B cell (primary cell): ENCODE measurements at regions of chr6 and their contacts with region 1.

Region 1: GRCh38 chr6:87701676-87702588 is at the start of gene AKIRIN2:
- DNase-seq: peak; percentile 99
- ATAC-seq: peak; percentile 77
- H3K4me3 ChIP-seq: peak within 1 kb of the TSS; percentile 86 to 100 (median 92)
- H3K4me3 Mint-ChIP-seq: peak within 1 kb of the TSS; percentile 97
- H3K27ac ChIP-seq: peak within 1 kb of the TSS; percentile 96 to 98
- H3K27ac Mint-ChIP-seq: peak within 1 kb of the TSS; percentile 99
- H3K4me1 ChIP-seq: peaks cover 16 to 32% of the 10 kb centered on the region in 2 donors
- H3K4me1 Mint-ChIP-seq: peaks cover 53% of the 10 kb centered on the region
- H3K27me3 ChIP-seq: no peaks in the 10 kb centered on the region
- H3K27me3 Mint-ChIP-seq: no peaks in the 10 kb centered on the region
- CTCF ChIP-seq: no peak
- total RNA-seq, gene AKIRIN2: 105 and 108 TPM in 2 replicates

Region 2: GRCh38 chr6:87407901-87408720 is 293.8 kb before region 1 on chr6 and contains the start of gene CFAP206:
- CTCF ChIA-PET with region 1: no interaction called
- POLR2A ChIA-PET with region 1: interaction called, 3 read pairs
- intact Hi-C with region 1: loop called (anchors 5 kb)
- DNase-seq: peak; percentile 91
- ATAC-seq: peak; percentile 75
- H3K4me3 ChIP-seq: peak within 1 kb of the TSS; percentile 83 to 98 (median 94)
- H3K4me3 Mint-ChIP-seq: peak within 1 kb of the TSS; percentile 91
- H3K27ac ChIP-seq: peak within 1 kb of the TSS; percentile 57 to 81
- H3K27ac Mint-ChIP-seq: peak within 1 kb of the TSS; percentile 86
- H3K4me1 ChIP-seq: peaks cover 4 to 10% of the 10 kb centered on the region in 2 donors
- H3K4me1 Mint-ChIP-seq: peaks cover 9% of the 10 kb centered on the region
- H3K27me3 ChIP-seq: peaks cover 0 to 7% (median 0%) of the 10 kb centered on the region in 4 experiments
- H3K27me3 Mint-ChIP-seq: peaks cover 8% of the 10 kb centered on the region
- CTCF ChIP-seq: no peak
- total RNA-seq, gene CFAP206: not detected in 2 replicates

Region 3: DNA sequence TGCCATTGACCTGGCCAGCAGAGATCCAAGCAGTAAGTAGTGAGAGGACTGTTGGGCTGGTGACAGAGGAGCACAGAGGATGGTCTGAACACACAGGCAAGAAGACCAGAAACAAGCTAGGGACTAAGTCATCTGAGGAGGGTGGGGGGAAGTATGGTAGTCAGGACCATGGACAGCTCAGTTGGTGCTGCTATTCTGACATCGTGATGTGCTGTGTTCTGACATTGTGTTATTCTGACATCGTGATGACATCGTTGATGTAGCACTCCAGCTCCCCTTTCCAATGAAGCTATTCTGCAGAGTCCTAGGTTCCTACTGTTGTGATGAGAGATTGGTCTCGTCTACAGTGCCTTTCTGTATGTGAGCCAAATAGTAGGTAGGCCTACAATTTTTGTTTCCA is 265.5 kb before region 1 on chr6:
- CTCF ChIA-PET with region 1: no interaction called
- POLR2A ChIA-PET with region 1: no interaction called
- intact Hi-C with region 1: no loop called
- DNase-seq: peak; percentile 61
- ATAC-seq: peak; percentile 41
- H3K4me3 ChIP-seq: no peak overlapping the region
- H3K4me3 Mint-ChIP-seq: no peak overlapping the region
- H3K27ac ChIP-seq: no peak overlapping the region
- H3K27ac Mint-ChIP-seq: no peak overlapping the region
- H3K4me1 ChIP-seq: no peaks in the 10 kb centered on the region
- H3K4me1 Mint-ChIP-seq: no peaks in the 10 kb centered on the region
- H3K27me3 ChIP-seq: no peaks in the 10 kb centered on the region
- H3K27me3 Mint-ChIP-seq: peaks cover 8% of the 10 kb centered on the region
- CTCF ChIP-seq: no peak

Region 4: DNA sequence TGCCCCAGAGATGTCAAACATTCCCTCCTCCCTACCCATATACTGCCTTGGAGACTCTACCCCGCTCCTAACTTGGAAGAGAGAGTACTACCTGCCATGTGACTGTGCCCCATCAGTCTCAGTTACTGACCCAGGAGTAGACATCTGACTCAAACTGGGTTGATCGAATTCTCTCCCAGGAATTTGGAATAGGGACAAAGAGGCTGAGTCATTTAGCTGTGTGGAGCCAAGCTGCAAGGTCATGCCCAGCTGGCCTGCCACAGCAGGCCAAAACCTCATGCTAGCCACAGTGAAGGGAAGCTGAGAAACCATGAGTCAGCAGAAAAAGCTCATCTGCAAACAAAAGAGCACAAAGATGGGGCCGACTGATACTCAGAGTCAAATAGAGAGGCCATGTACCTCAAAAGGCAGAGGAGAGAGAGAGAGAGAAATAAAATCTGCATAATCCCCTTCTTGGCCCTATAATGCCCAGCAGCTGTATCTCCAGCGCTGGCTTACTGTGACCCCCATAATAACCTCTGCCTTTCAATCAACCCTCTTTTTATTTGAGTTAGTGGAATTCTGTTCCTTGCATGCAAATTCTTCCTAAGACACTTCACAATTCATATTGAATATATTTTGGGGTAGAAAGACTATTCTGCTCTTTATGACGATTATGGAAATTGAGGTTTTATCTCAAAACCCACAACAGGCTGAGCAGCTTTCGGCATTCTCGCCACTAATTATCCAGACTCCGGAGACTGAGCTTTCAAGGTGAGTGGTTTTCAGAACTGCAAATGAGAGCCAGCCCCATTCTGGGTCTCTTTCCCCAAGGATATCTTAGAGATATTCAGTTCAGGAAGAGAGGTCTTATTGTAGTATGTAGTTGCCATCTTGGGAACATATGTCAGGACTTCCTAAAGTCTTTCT is 21.5 kb after region 1 on chr6:
- CTCF ChIA-PET with region 1: interaction called, 4 read pairs
- POLR2A ChIA-PET with region 1: interaction called, 5 read pairs
- intact Hi-C with region 1: loop called (anchors 1 kb)
- DNase-seq: no peak
- ATAC-seq: no peak
- H3K4me3 ChIP-seq: no peak overlapping the region
- H3K4me3 Mint-ChIP-seq: no peak overlapping the region
- H3K27ac ChIP-seq: no peak overlapping the region
- H3K27ac Mint-ChIP-seq: no peak overlapping the region
- H3K4me1 ChIP-seq: peaks cover 24 to 28% of the 10 kb centered on the region in 2 donors
- H3K4me1 Mint-ChIP-seq: peaks cover 30% of the 10 kb centered on the region
- H3K27me3 ChIP-seq: no peaks in the 10 kb centered on the region
- H3K27me3 Mint-ChIP-seq: no peaks in the 10 kb centered on the region
- CTCF ChIP-seq: no peak

Region 5: GRCh38 chr6:87784690-87785089 is 82.8 kb after region 1 on chr6:
- CTCF ChIA-PET with region 1: no interaction called
- POLR2A ChIA-PET with region 1: no interaction called
- intact Hi-C with region 1: no loop called
- DNase-seq: no peak
- ATAC-seq: no peak
- H3K4me3 ChIP-seq: no peak overlapping the region
- H3K4me3 Mint-ChIP-seq: no peak overlapping the region
- H3K27ac ChIP-seq: no peak overlapping the region
- H3K27ac Mint-ChIP-seq: no peak overlapping the region
- H3K4me1 ChIP-seq: no peaks in the 10 kb centered on the region
- H3K4me1 Mint-ChIP-seq: no peaks in the 10 kb centered on the region
- H3K27me3 ChIP-seq: no peaks in the 10 kb centered on the region
- H3K27me3 Mint-ChIP-seq: no peaks in the 10 kb centered on the region
- CTCF ChIP-seq: no peak

Region 6: GRCh38 chr6:87799651-87800050 is 97.7 kb after region 1 on chr6:
- CTCF ChIA-PET with region 1: interaction called, 3 read pairs
- POLR2A ChIA-PET with region 1: interaction called, 4 read pairs
- intact Hi-C with region 1: loop called (anchors 2 kb)
- DNase-seq: peak; percentile 63
- ATAC-seq: peak; percentile 69
- H3K4me3 ChIP-seq: peak overlapping the region in 2 of 5 experiments; percentile 13 to 20
- H3K4me3 Mint-ChIP-seq: peak overlapping the region; percentile 42
- H3K27ac ChIP-seq: peak overlapping the region in 1 of 2 donors; percentile 50
- H3K27ac Mint-ChIP-seq: peak overlapping the region; percentile 28
- H3K4me1 ChIP-seq: peaks cover 38 to 54% of the 10 kb centered on the region in 2 donors
- H3K4me1 Mint-ChIP-seq: peaks cover 46% of the 10 kb centered on the region
- H3K27me3 ChIP-seq: no peaks in the 10 kb centered on the region
- H3K27me3 Mint-ChIP-seq: no peaks in the 10 kb centered on the region
- CTCF ChIP-seq: no peak

Region 7: DNA sequence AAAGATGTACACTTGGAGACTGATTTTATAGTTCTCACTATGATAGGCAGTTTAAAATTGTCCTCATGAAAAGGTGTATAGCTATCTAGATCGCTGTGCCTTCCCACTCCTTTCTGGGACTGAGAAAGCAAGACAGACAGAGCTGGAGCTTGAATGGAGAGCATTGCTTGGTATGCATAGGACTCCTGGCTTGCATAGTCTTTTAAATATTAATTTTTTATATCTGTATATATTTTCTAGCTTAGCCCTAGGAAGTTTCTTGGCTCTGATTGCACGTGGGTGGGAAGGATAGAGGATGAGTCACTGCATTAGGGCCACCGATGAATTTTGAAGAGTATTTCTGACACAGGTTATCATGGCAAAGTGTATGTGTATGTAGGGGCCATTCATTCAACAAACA is 195.7 kb after region 1 on chr6:
- CTCF ChIA-PET with region 1: no interaction called
- POLR2A ChIA-PET with region 1: no interaction called
- intact Hi-C with region 1: no loop called
- DNase-seq: no peak
- ATAC-seq: no peak
- H3K4me3 ChIP-seq: no peak overlapping the region
- H3K4me3 Mint-ChIP-seq: no peak overlapping the region
- H3K27ac ChIP-seq: no peak overlapping the region
- H3K27ac Mint-ChIP-seq: no peak overlapping the region
- H3K4me1 ChIP-seq: no peaks in the 10 kb centered on the region
- H3K4me1 Mint-ChIP-seq: no peaks in the 10 kb centered on the region
- H3K27me3 ChIP-seq: no peaks in the 10 kb centered on the region
- H3K27me3 Mint-ChIP-seq: no peaks in the 10 kb centered on the region
- CTCF ChIP-seq: no peak

Region 8: GRCh38 chr6:88072462-88072861 is 370.5 kb after region 1 on chr6:
- CTCF ChIA-PET with region 1: no interaction called
- POLR2A ChIA-PET with region 1: no interaction called
- intact Hi-C with region 1: no loop called
- DNase-seq: no peak
- ATAC-seq: no peak
- H3K4me3 ChIP-seq: no peak overlapping the region
- H3K4me3 Mint-ChIP-seq: no peak overlapping the region
- H3K27ac ChIP-seq: no peak overlapping the region
- H3K27ac Mint-ChIP-seq: no peak overlapping the region
- H3K4me1 ChIP-seq: no peaks in the 10 kb centered on the region
- H3K4me1 Mint-ChIP-seq: peaks cover 4% of the 10 kb centered on the region
- H3K27me3 ChIP-seq: peaks cover 0 to 4% (median 0%) of the 10 kb centered on the region in 4 experiments
- H3K27me3 Mint-ChIP-seq: no peaks in the 10 kb centered on the region
- CTCF ChIP-seq: no peak

Region 9: DNA sequence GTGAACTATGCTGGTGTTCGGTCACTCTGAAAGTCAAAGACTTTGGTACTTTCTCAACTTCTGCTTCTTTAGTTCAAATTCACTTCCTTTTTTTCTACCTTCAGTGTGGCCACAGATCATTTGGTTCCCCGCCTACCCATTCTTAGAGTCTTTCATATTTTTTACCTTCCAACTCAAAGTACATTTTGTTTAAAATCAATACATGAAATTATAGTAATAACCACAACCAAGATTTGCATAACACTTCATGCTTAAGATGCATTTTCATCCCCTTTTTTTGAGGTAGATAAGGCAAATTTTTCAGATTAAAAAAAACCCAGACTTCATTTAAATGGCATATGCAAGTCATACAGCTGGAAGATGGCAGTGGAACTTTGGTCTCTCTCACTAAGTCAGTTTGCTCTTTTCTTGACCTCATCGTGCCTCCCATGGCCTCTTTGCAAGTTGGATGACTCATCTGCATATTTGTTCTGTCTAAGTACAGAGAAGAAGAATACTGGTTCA is 476.1 kb after region 1 on chr6:
- CTCF ChIA-PET with region 1: no interaction called
- POLR2A ChIA-PET with region 1: no interaction called
- intact Hi-C with region 1: loop called (anchors 2 kb)
- DNase-seq: peak; percentile 79
- ATAC-seq: peak; percentile 61
- H3K4me3 ChIP-seq: peak overlapping the region in 1 of 5 experiments; percentile 45
- H3K4me3 Mint-ChIP-seq: peak overlapping the region; percentile 57
- H3K27ac ChIP-seq: peak overlapping the region; percentile 61 to 85
- H3K27ac Mint-ChIP-seq: peak overlapping the region; percentile 81
- H3K4me1 ChIP-seq: peaks cover 52 to 63% of the 10 kb centered on the region in 2 donors
- H3K4me1 Mint-ChIP-seq: peaks cover 58% of the 10 kb centered on the region
- H3K27me3 ChIP-seq: no peaks in the 10 kb centered on the region
- H3K27me3 Mint-ChIP-seq: no peaks in the 10 kb centered on the region
- CTCF ChIP-seq: no peak

Region 10: GRCh38 chr6:89080542-89081422 is 1378.8 kb after region 1 on chr6 and contains the start of gene PNRC1:
- CTCF ChIA-PET with region 1: no interaction called
- POLR2A ChIA-PET with region 1: interaction called, 8 read pairs
- intact Hi-C with region 1: loop called (anchors 1 kb)
- DNase-seq: peak; percentile 100
- ATAC-seq: peak; percentile 76
- H3K4me3 ChIP-seq: peak within 1 kb of the TSS; percentile 81 to 100 (median 98)
- H3K4me3 Mint-ChIP-seq: peak within 1 kb of the TSS; percentile 99
- H3K27ac ChIP-seq: peak within 1 kb of the TSS; percentile 99
- H3K27ac Mint-ChIP-seq: peak within 1 kb of the TSS; percentile 98
- H3K4me1 ChIP-seq: peaks cover 25 to 29% of the 10 kb centered on the region in 2 donors
- H3K4me1 Mint-ChIP-seq: peaks cover 38% of the 10 kb centered on the region
- H3K27me3 ChIP-seq: no peaks in the 10 kb centered on the region
- H3K27me3 Mint-ChIP-seq: no peaks in the 10 kb centered on the region
- CTCF ChIP-seq: no peak
- total RNA-seq, gene PNRC1: 460 and 486 TPM in 2 replicates